ENCODE measurements at regions of chr15 and their contacts with region 1.

Region 1: GRCh38 chr15:99076552-99077308 is 28.1 kb upstream of the SYNM start:
- DNase-seq: peak; percentile 81
- H3K4me3 ChIP-seq: peak overlapping the region; percentile 28
- H3K27ac ChIP-seq: no peak overlapping the region
- H3K4me1 ChIP-seq: no peaks in the 10 kb centered on the region
- H3K27me3 ChIP-seq: no peaks in the 10 kb centered on the region
- CTCF ChIP-seq: peak; percentile 85

Region 2: DNA sequence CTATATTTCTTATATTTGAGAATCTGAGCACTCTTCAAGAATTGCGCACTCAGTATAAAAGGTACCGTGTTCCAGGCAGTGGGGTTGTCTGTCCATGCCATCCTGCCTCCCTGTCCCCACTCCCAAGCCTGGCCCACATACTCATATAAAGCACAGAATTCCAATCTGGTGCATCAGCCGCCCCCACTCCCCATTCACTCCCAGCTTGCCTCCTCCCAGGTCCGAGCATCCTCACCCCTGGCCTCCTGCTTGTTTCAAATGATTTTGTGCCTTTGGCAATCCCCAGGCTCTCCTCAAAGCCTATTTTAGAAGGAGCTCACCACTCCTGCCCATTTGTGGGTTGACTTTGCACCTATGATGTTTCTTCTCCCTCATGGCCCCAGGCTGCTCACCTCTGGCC is 450.6 kb before region 1 on chr15:
- CTCF ChIA-PET with region 1: no interaction called
- POLR2A ChIA-PET with region 1: no interaction called
- intact Hi-C with region 1: no loop called
- DNase-seq: no peak
- H3K4me3 ChIP-seq: no peak overlapping the region
- H3K27ac ChIP-seq: no peak overlapping the region
- H3K4me1 ChIP-seq: no peaks in the 10 kb centered on the region
- H3K27me3 ChIP-seq: peaks cover 60% of the 10 kb centered on the region
- CTCF ChIP-seq: no peak

Region 3: GRCh38 chr15:98881526-98882520 is 194.9 kb before region 1 on chr15:
- CTCF ChIA-PET with region 1: no interaction called
- POLR2A ChIA-PET with region 1: no interaction called
- intact Hi-C with region 1: loop called (anchors 10 kb)
- DNase-seq: peak; percentile 85
- H3K4me3 ChIP-seq: no peak overlapping the region
- H3K27ac ChIP-seq: no peak overlapping the region
- H3K4me1 ChIP-seq: peaks cover 4% of the 10 kb centered on the region
- H3K27me3 ChIP-seq: no peaks in the 10 kb centered on the region
- CTCF ChIP-seq: peak; percentile 71

Region 4: DNA sequence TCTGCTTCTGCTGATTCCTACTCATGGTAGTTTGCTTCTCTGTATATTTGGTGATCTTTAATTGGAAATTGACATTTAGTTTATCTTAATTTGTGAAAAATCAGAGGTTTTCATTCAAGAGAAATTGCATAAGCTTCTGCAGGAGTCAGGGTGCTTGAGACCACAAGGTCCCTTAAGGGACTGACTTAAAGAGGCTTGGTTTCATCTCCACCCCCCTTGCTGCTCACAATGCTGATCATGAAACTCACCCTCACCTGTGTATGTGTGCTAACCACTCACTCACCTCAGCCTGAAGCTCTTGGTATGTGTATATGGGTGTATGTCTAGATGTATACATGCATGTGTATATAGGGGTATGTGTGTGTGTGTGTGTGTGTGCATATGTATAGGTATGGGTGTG is 80.6 kb before region 1 on chr15:
- CTCF ChIA-PET with region 1: no interaction called
- POLR2A ChIA-PET with region 1: no interaction called
- intact Hi-C with region 1: no loop called
- DNase-seq: no peak
- H3K4me3 ChIP-seq: no peak overlapping the region
- H3K27ac ChIP-seq: no peak overlapping the region
- H3K4me1 ChIP-seq: no peaks in the 10 kb centered on the region
- H3K27me3 ChIP-seq: no peaks in the 10 kb centered on the region
- CTCF ChIP-seq: no peak

Region 5: GRCh38 chr15:100141311-100142001 is 1064.7 kb after region 1 on chr15:
- CTCF ChIA-PET with region 1: no interaction called
- POLR2A ChIA-PET with region 1: no interaction called
- intact Hi-C with region 1: no loop called
- DNase-seq: no peak
- H3K4me3 ChIP-seq: no peak overlapping the region
- H3K27ac ChIP-seq: no peak overlapping the region
- H3K4me1 ChIP-seq: no peaks in the 10 kb centered on the region
- H3K27me3 ChIP-seq: no peaks in the 10 kb centered on the region
- CTCF ChIP-seq: no peak

Measured in A673 (cell line).